ENCODE measurements at regions of chr1 and their contacts with region 1.

Region 1: DNA sequence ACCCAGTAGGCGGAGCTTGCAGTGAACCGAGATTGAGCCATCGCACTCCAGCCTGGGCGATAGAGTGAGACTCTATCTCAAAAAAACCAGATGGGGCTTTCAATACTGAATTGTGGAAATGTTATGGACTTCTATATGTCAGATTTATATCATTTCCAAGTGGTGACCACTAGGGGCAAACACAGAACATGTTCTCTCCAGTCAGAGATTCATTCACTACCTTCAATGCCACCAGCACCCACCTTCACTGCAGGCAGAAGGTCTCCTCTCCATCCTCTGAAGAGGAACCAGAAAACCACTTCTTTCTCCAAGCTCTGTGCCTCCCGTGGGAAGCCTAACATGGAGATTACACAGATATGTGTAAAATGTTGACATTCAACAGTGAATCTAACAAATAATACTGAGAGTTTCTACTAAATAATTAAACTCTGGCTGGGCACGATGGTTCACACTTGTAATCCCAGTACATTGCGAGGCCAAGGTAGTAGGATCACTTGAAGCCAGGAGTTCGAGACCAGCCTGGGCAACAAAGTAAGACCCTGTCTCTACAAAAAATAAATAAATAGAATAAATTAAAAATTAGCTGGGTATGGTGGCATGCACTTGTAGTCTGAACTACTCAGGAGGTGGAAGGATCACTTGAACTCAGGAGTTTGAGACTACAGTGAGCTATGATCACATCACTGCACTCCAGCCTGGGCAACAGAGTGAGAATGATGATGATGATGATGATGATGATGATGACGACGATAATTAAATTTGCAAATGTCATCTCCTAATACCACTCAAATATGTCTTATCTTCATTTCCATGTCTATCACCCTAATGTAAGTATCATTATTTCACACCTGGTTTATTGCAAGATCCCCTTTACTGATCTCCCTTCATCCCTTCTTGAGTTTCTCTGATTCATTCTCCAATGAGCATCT is 151.1 kb downstream of the ZNF281 start:
- DNase-seq: no peak
- ATAC-seq: peak; percentile 82
- H3K4me3 Mint-ChIP-seq: no peak overlapping the region
- H3K27ac Mint-ChIP-seq: no peak overlapping the region
- H3K4me1 Mint-ChIP-seq: peaks cover 7% of the 10 kb centered on the region
- H3K27me3 Mint-ChIP-seq: no peaks in the 10 kb centered on the region
- CTCF ChIP-seq: peak; percentile 45

Region 2: GRCh38 chr1:199759268-199759724 is 499.4 kb before region 1 on chr1:
- CTCF ChIA-PET with region 1: no interaction called
- POLR2A ChIA-PET with region 1: interaction called, 18 read pairs
- intact Hi-C with region 1: no loop called
- DNase-seq: no peak
- ATAC-seq: no peak
- H3K4me3 Mint-ChIP-seq: no peak overlapping the region
- H3K27ac Mint-ChIP-seq: no peak overlapping the region
- H3K4me1 Mint-ChIP-seq: no peaks in the 10 kb centered on the region
- H3K27me3 Mint-ChIP-seq: peaks cover 21% of the 10 kb centered on the region
- CTCF ChIP-seq: no peak

Measured in activated B cell treated with CpG ODN at 0.5 μM for 24 hours (primary cell).